AG04449 (cell line): ENCODE measurements at regions of chr4 and their contacts with region 1.

Region 1: GRCh38 chr4:155953151-155954114 is at the start of gene CTSO:
- DNase-seq: no peak
- H3K4me3 ChIP-seq: peak within 1 kb of the TSS; percentile 71
- CTCF ChIP-seq: peak; percentile 47

Region 2: GRCh38 chr4:155403886-155404285 is 549.5 kb before region 1 on chr4:
- CTCF ChIA-PET with region 1: interaction called, 13 read pairs
- POLR2A ChIA-PET with region 1: no interaction called
- DNase-seq: no peak
- H3K4me3 ChIP-seq: no peak overlapping the region
- CTCF ChIP-seq: no peak

Region 3: GRCh38 chr4:155809835-155810234 is 143.6 kb before region 1 on chr4:
- CTCF ChIA-PET with region 1: interaction called, 132 read pairs
- POLR2A ChIA-PET with region 1: interaction called, 7 read pairs
- DNase-seq: no peak
- H3K4me3 ChIP-seq: no peak overlapping the region
- CTCF ChIP-seq: peak; percentile 36

Region 4: GRCh38 chr4:156197216-156197615 is 243.8 kb after region 1 on chr4:
- CTCF ChIA-PET with region 1: no interaction called
- POLR2A ChIA-PET with region 1: no interaction called
- DNase-seq: no peak
- H3K4me3 ChIP-seq: no peak overlapping the region
- CTCF ChIP-seq: no peak

Region 5: DNA sequence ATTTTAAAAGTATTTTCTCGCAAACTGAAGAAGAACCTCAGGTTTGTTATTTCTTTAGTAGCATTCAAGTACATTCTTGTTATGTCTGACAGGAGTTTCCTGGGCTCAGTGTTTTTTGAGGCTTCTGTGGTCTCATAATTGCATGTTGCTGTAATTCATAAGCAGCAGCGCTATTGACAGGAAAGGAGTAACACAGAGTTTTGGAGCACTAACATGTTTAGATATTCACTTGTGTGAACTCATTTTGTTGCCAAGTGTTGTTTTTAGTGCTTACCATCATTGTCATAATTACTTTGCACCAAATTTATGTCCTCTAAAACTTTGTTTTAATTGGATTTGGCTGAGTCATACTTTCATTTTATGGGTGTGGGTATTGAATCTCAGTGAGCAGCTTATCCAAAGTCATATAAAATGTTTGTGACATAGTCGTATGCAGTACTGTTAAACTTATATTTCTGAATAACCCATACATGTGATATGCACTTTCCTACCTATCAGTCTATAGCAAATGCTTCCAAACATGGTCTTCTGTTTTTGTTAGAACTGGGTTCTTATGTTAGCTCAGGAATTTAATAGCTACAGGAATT is 358.9 kb after region 1 on chr4:
- CTCF ChIA-PET with region 1: no interaction called
- POLR2A ChIA-PET with region 1: no interaction called
- DNase-seq: no peak
- H3K4me3 ChIP-seq: no peak overlapping the region
- CTCF ChIP-seq: no peak